WTC11 (cell line): ENCODE measurements at regions of chr17 and their contacts with region 1.

Region 1: GRCh38 chr17:4986951-4987766 is at the start of gene CAMTA2:
- DNase-seq: peak; percentile 88
- ATAC-seq: peak; percentile 77
- H3K4me3 Mint-ChIP-seq: peak within 1 kb of the TSS; percentile 77
- H3K27ac Mint-ChIP-seq: no peak within 1 kb of the TSS
- H3K4me1 Mint-ChIP-seq: peaks cover 25% of the 10 kb centered on the region
- H3K27me3 Mint-ChIP-seq: peaks cover 44% of the 10 kb centered on the region
- CTCF ChIP-seq: peak; percentile 37
- total RNA-seq, gene CAMTA2: 9.2 to 14.2 TPM (median 12.3 TPM) in 3 replicates

Region 2: DNA sequence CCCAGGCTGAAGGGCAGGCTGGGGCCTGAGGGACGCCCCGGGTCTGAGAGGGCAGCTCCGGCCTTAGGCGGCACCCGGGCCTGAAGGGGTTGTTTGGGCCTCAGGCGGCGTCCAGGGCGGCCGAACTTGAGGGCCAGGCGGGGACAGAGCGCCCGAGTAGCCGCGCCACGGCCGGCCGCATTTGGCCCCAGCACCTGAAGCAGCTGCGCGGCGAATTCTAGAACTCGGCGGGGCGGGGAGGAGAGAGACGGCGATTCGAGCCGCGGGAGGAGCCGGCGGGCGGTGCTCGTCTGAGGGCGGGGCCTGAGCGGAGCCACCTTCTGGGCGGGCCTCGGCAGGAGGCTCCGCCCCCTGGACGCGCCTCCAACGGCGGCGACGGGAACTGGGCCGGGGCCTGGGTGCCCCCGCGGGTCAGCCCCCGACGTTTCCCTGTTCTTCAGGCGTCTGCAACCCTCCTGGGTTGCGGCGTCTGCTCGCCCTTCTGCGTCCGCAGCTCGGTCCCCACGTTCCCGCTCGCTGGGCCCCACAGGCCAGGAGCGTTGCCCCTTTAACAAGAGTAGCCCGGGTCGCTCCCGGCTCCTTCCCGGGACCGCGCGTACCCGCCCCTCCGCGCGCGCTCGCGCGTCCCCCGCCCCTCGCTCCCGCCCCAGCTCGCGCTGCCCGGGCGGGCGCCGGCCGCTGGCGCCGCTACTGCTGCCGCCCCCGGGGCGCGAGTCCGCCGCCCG is 10.3 kb after region 1 on chr17 and contains the starts of genes INCA1 and KIF1C:
- CTCF ChIA-PET with region 1: interaction called, 15 read pairs
- POLR2A ChIA-PET with region 1: interaction called, 12 read pairs
- DNase-seq: peak; percentile 94
- ATAC-seq: peak; percentile 85
- H3K4me3 Mint-ChIP-seq: peak within 1 kb of the TSS; percentile 87
- H3K27ac Mint-ChIP-seq: peak within 1 kb of the TSS; percentile 57; the same call in 1 of the 2 replicates
- H3K4me1 Mint-ChIP-seq: peaks cover 16% of the 10 kb centered on the region
- H3K27me3 Mint-ChIP-seq: peaks cover 28% of the 10 kb centered on the region
- CTCF ChIP-seq: no peak
- total RNA-seq, gene INCA1: 0.61 to 1.1 TPM (median 1.1 TPM) in 3 replicates
- total RNA-seq, gene KIF1C: 112 to 130 TPM (median 115 TPM) in 3 replicates

Region 3: DNA sequence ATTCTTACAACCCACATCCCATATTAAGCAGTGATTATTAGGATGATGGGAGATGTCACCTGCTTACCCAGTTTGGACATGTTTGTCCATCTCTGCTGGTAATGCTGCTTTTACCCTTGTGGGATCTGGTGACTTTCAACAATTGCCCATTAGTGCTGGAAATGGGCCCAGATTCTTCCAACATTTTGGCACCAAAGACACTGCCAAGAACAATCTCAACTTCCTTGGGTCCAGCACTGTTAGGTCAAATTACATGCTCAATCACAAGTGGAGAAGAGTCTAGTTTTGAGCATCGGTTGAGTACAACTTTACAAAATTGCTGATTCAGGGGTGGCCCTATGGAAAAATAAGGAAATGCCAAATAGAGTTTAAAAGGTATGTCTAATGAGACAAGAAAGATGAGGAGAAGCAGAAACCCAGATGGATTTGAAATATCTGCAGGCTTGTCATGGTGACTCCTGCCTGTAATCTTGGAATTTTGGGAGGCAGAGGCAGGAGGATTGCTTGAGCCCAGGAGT is 78.1 kb after region 1 on chr17:
- CTCF ChIA-PET with region 1: interaction called, 13 read pairs
- POLR2A ChIA-PET with region 1: no interaction called
- DNase-seq: no peak
- ATAC-seq: no peak
- H3K4me3 Mint-ChIP-seq: no peak overlapping the region
- H3K27ac Mint-ChIP-seq: no peak overlapping the region
- H3K4me1 Mint-ChIP-seq: no peaks in the 10 kb centered on the region
- H3K27me3 Mint-ChIP-seq: peaks cover 12% of the 10 kb centered on the region
- CTCF ChIP-seq: no peak